ENCODE measurements at regions of chr6 and their contacts with region 1.

Region 1: DNA sequence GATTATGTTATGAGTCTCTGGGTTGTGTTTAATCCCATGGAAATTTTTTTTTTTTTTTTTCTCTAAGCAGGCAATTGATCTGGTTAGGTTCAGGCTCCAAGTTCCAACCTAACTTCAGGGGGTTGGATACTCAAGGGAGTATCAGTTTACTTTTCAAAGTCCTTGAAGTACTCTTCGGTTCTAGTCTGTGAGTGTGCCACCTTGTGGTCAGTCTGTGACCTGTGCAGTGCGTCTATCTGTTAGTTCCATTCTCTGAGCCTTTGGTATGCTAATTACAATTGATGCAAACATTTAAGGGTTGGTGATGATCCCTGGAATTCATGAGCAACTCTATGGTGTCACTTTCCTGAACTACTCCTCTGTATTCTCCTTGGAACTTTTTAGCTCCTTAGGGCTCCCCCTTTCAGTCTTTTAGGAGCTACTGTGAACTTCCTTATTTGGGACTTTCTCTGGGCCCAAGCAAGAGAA is 342.0 kb downstream of the SOX4 start:
- DNase-seq: no peak
- H3K4me3 ChIP-seq: no peak overlapping the region
- H3K27ac ChIP-seq: no peak overlapping the region
- H3K4me1 ChIP-seq: peaks cover 19% of the 10 kb centered on the region
- H3K27me3 ChIP-seq: no peaks in the 10 kb centered on the region
- CTCF ChIP-seq: peak; percentile 42 to 45
- POLR2A ChIP-seq: no peak

Region 2: DNA sequence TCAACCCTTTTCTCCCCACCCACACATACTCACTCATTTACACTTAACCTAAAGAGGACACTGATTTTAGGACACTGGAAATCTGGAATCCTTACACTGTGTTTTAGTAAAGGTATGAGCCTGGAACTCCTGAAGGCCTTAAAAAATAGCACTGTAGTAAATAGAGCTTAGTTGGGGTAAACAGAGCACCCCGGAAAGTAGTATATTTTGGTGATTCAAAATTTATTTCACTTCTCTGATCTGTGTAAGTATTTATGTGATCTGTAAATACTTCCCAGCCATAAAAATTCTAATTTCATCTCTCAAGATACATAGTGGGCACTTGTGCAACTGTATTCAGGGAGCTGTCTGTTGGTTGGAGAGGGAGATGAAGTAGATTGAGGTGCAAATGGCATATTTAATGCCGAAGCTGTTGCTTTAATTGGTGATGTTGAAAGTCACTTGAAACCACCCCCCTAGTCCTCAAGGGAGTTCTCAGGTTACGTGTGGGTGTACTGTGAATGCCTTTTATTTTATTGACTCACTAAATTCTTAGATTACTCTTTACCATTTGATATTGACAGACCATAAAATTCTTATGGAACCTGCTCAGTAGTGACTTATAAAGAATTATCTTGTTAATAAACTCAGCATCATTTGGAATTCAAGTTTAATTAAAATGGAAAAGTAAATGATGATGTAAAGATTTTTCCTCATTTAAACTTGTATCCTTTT is 187.1 kb before region 1 on chr6:
- CTCF ChIA-PET with region 1: no interaction called
- POLR2A ChIA-PET with region 1: no interaction called
- dilution Hi-C with region 1: no loop called
- intact Hi-C with region 1: loop called (anchors 10 kb)
- DNase-seq: no peak
- H3K4me3 ChIP-seq: no peak overlapping the region
- H3K27ac ChIP-seq: no peak overlapping the region
- H3K4me1 ChIP-seq: peaks cover 29% of the 10 kb centered on the region
- H3K27me3 ChIP-seq: no peaks in the 10 kb centered on the region
- CTCF ChIP-seq: no peak
- POLR2A ChIP-seq: no peak

Region 3: GRCh38 chr6:21977168-21977730 is 41.7 kb after region 1 on chr6:
- CTCF ChIA-PET with region 1: no interaction called
- POLR2A ChIA-PET with region 1: no interaction called
- dilution Hi-C with region 1: no loop called
- intact Hi-C with region 1: no loop called
- DNase-seq: peak; percentile 18
- H3K4me3 ChIP-seq: no peak overlapping the region
- H3K27ac ChIP-seq: no peak overlapping the region
- H3K4me1 ChIP-seq: no peaks in the 10 kb centered on the region
- H3K27me3 ChIP-seq: no peaks in the 10 kb centered on the region
- CTCF ChIP-seq: no peak
- POLR2A ChIP-seq: no peak

Region 4: DNA sequence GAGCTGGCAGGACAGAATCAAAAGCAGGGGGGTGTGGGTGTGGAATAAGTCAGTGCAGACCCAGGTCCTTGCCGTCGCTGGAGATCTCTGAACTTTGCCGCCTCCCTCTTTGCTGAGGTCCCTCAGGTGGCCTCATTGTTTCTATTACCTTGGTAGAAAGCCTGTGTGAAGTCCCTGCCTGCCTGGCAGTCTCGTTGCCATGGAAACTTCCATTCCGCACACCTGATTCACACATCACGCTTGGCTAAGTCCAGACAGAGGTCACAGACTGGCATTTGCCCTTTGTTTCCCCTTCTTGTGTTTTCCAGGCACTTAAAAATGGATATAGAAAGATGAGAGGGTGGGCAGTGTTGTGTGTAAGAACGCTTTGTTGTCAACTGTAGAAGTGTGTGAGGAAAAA is 100.7 kb after region 1 on chr6:
- CTCF ChIA-PET with region 1: no interaction called
- POLR2A ChIA-PET with region 1: no interaction called
- dilution Hi-C with region 1: no loop called
- intact Hi-C with region 1: loop called (anchors 1 kb)
- DNase-seq: peak; percentile 88
- H3K4me3 ChIP-seq: no peak overlapping the region
- H3K27ac ChIP-seq: no peak overlapping the region
- H3K4me1 ChIP-seq: peaks cover 8% of the 10 kb centered on the region
- H3K27me3 ChIP-seq: no peaks in the 10 kb centered on the region
- CTCF ChIP-seq: no peak
- POLR2A ChIP-seq: no peak

Region 5: DNA sequence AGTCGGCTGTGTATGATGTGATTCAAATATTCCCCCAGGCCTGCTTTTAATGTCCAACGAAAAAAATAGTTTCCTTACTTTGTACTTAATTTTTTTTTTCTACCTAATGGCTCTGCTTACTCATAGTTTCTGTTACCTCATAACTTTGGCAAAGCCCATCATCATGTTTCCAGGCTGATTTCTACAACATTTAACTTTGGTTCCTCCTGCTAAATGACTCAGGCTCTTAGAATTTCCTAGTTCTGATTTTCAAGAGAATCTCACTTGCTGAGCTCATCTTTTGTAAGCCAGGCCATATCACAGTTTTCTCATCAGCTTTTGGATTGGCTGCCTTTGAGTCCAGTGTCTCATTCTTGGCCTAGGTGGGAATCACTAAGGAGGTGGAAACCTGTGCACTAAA is 956.9 kb after region 1 on chr6:
- CTCF ChIA-PET with region 1: no interaction called
- POLR2A ChIA-PET with region 1: no interaction called
- dilution Hi-C with region 1: no loop called
- intact Hi-C with region 1: loop called (anchors 5 kb)
- DNase-seq: peak; percentile 96
- H3K4me3 ChIP-seq: no peak overlapping the region
- H3K27ac ChIP-seq: peak overlapping the region; percentile 95
- H3K4me1 ChIP-seq: peaks cover 28% of the 10 kb centered on the region
- H3K27me3 ChIP-seq: no peaks in the 10 kb centered on the region
- CTCF ChIP-seq: no peak
- POLR2A ChIP-seq: peak; percentile 19

Measured in endothelial cell of umbilical vein (primary cell).